ENCODE measurements at regions of chr10 and their contacts with region 1.

Region 1: GRCh38 chr10:72223743-72224101 is 7.6 kb upstream of the ASCC1 start:
- DNase-seq: no peak
- H3K4me3 ChIP-seq: no peak overlapping the region
- H3K27ac ChIP-seq: peak overlapping the region; percentile 71
- H3K4me1 ChIP-seq: peaks cover 19% of the 10 kb centered on the region
- H3K27me3 ChIP-seq: no peaks in the 10 kb centered on the region
- CTCF ChIP-seq: no peak
- POLR2A ChIP-seq: no peak

Region 2: GRCh38 chr10:72273410-72274212 is 49.9 kb after region 1 on chr10 and contains the start of gene DDIT4:
- intact Hi-C with region 1: loop called (anchors 10 kb)
- DNase-seq: peak in 1 of 2 donors; percentile 100
- H3K4me3 ChIP-seq: peak within 1 kb of the TSS; percentile 90 to 99
- H3K27ac ChIP-seq: peak within 1 kb of the TSS; percentile 99
- H3K4me1 ChIP-seq: peaks cover 34% of the 10 kb centered on the region
- H3K27me3 ChIP-seq: no peaks in the 10 kb centered on the region
- CTCF ChIP-seq: no peak
- POLR2A ChIP-seq: peak; percentile 99 to 100
- total RNA-seq, gene DDIT4: 1,063 TPM

Measured in vagina (tissue), 2 donors.